ENCODE measurements at regions of chr17 and their contacts with region 1.

Region 1: GRCh38 chr17:1648963-1649843 is 463 bp downstream of the RILP start:
- DNase-seq: peak; percentile 90 to 96 (median 94)
- H3K4me3 ChIP-seq: peak overlapping the region; percentile 59
- H3K4me3 Mint-ChIP-seq: peak overlapping the region; percentile 50 to 77 (median 72)
- H3K27ac ChIP-seq: peak overlapping the region; percentile 59
- H3K27ac Mint-ChIP-seq: peak overlapping the region in 3 of 8 donors; percentile 29 to 72 (median 66)
- H3K4me1 ChIP-seq: peaks cover 19% of the 10 kb centered on the region
- H3K4me1 Mint-ChIP-seq: peaks cover 6 to 29% (median 10%) of the 10 kb centered on the region in 3 donors
- H3K27me3 ChIP-seq: no peaks in the 10 kb centered on the region
- H3K27me3 Mint-ChIP-seq: no peaks in the 10 kb centered on the region

Region 2: DNA sequence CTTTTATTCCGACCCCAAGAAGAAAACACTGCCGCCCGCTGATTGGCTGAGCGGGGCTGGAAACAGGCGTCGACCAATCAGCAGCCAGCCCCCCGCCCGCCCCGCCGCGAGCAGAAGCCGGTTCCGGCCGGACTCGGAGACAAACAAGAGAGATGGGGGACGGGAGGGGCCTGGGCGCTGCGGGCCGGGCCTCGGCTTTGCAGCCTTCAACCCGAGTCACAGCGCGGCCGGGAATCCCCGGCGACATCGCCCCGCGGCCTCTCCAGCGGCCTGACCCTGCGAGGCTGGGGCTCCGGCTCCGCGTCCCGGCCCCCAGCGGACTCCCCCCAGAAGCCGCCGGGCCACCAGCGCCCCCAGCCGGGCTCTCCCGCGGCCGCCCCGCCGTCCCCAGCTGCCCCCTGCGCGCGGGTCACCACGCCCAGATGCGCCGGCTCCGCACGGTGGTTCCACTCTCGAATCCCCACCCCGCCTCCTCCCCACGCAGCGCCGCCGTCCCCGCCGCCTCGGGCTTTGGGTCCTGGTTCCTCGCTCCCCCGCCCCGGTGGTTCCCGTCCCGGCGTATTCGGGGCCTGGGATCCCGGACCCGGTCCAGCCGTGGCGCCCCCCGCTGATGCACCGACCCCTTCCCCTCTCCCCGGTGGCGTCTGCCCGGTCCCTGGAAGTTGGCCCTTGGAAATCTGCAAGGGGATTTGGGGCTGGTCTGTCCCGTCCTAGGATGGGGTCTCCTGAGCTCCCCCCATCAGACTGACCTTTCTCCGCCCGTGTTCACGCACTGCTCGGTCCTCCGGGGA is 20.2 kb before region 1 on chr17:
- CTCF ChIA-PET with region 1: interaction called, 49 read pairs
- POLR2A ChIA-PET with region 1: interaction called, 20 read pairs
- DNase-seq: peak; percentile 83 to 94 (median 86)
- H3K4me3 ChIP-seq: peak overlapping the region; percentile 77
- H3K4me3 Mint-ChIP-seq: peak overlapping the region; percentile 91 to 97 (median 94)
- H3K27ac ChIP-seq: peak overlapping the region; percentile 69
- H3K27ac Mint-ChIP-seq: peak overlapping the region; percentile 75 to 94 (median 86)
- H3K4me1 ChIP-seq: peaks cover 17% of the 10 kb centered on the region
- H3K4me1 Mint-ChIP-seq: peaks cover 10 to 24% (median 11%) of the 10 kb centered on the region in 3 donors
- H3K27me3 ChIP-seq: no peaks in the 10 kb centered on the region
- H3K27me3 Mint-ChIP-seq: peaks cover 0 to 4% of the 10 kb centered on the region in 2 donors

Region 3: GRCh38 chr17:1661045-1661444 is 11.8 kb after region 1 on chr17:
- CTCF ChIA-PET with region 1: interaction called, 15 read pairs
- POLR2A ChIA-PET with region 1: interaction called, 7 read pairs
- DNase-seq: no peak
- H3K4me3 ChIP-seq: no peak overlapping the region
- H3K4me3 Mint-ChIP-seq: no peak overlapping the region
- H3K27ac ChIP-seq: no peak overlapping the region
- H3K27ac Mint-ChIP-seq: peak overlapping the region in 1 of 8 donors; percentile 71
- H3K4me1 ChIP-seq: no peaks in the 10 kb centered on the region
- H3K4me1 Mint-ChIP-seq: peaks cover 2 to 9% (median 3%) of the 10 kb centered on the region in 3 donors
- H3K27me3 ChIP-seq: no peaks in the 10 kb centered on the region
- H3K27me3 Mint-ChIP-seq: no peaks in the 10 kb centered on the region

Region 4: GRCh38 chr17:1673041-1673785 is 24.0 kb after region 1 on chr17:
- CTCF ChIA-PET with region 1: interaction called, 19 read pairs
- POLR2A ChIA-PET with region 1: no interaction called
- DNase-seq: peak in 3 of 5 donors; percentile 9 to 19 (median 10)
- H3K4me3 ChIP-seq: no peak overlapping the region
- H3K4me3 Mint-ChIP-seq: no peak overlapping the region
- H3K27ac ChIP-seq: no peak overlapping the region
- H3K27ac Mint-ChIP-seq: peak overlapping the region in 6 of 8 donors; percentile 6 to 90 (median 48)
- H3K4me1 ChIP-seq: peaks cover 5% of the 10 kb centered on the region
- H3K4me1 Mint-ChIP-seq: peaks cover 21 to 41% (median 34%) of the 10 kb centered on the region in 3 donors
- H3K27me3 ChIP-seq: no peaks in the 10 kb centered on the region
- H3K27me3 Mint-ChIP-seq: no peaks in the 10 kb centered on the region

Region 5: DNA sequence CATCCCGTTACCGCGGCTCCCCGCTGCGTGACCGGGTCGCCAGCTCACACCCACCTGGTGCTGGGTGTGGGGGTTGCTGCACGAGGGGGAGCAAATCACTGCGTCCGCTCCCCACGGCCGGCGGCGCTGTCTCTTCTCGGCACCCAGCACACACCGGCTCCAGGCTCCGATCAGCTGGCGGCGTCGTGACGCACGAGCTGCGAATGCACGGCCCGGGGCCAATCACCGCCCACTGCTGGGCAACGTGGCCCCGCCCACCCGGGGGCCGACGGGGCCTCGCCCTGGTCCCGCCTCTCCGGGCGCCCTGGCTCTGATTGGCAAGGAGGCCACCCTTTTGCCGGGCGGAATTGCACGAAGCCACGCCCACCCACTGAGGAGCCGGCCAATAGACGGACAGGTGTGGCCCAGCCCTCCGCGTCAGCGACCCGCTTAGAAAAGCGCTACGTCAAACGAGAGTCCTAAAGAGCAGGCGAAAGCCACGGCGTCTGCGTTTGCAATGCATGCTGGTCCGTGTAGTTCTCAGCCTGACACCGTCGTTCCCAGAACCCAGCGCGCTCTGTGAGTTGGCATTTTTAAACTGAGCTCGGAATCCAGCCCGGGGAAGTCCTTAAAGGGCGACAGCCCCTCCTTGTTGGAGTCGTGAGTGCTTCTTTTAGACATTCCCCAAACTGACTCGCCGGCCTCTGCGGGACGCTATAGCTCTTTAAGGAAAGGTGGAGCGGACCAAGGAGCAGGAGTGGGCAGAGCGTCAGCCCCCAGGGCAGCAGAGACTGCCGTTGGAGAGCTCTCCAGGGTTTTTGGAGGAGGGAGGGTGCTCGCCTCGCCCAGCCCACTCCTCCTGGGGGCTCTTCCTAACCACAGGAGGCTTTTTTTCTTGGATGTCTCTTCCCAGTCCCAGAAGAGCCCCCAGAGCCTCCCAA is 67.1 kb after region 1 on chr17:
- CTCF ChIA-PET with region 1: interaction called, 11 read pairs
- POLR2A ChIA-PET with region 1: interaction called, 6 read pairs
- DNase-seq: peak; percentile 100
- H3K4me3 ChIP-seq: peak overlapping the region; percentile 85
- H3K4me3 Mint-ChIP-seq: peak overlapping the region; percentile 88 to 97 (median 93)
- H3K27ac ChIP-seq: peak overlapping the region; percentile 89
- H3K27ac Mint-ChIP-seq: peak overlapping the region; percentile 89 to 100 (median 96)
- H3K4me1 ChIP-seq: peaks cover 31% of the 10 kb centered on the region
- H3K4me1 Mint-ChIP-seq: peaks cover 26 to 39% (median 37%) of the 10 kb centered on the region in 3 donors
- H3K27me3 ChIP-seq: no peaks in the 10 kb centered on the region
- H3K27me3 Mint-ChIP-seq: no peaks in the 10 kb centered on the region

Region 6: DNA sequence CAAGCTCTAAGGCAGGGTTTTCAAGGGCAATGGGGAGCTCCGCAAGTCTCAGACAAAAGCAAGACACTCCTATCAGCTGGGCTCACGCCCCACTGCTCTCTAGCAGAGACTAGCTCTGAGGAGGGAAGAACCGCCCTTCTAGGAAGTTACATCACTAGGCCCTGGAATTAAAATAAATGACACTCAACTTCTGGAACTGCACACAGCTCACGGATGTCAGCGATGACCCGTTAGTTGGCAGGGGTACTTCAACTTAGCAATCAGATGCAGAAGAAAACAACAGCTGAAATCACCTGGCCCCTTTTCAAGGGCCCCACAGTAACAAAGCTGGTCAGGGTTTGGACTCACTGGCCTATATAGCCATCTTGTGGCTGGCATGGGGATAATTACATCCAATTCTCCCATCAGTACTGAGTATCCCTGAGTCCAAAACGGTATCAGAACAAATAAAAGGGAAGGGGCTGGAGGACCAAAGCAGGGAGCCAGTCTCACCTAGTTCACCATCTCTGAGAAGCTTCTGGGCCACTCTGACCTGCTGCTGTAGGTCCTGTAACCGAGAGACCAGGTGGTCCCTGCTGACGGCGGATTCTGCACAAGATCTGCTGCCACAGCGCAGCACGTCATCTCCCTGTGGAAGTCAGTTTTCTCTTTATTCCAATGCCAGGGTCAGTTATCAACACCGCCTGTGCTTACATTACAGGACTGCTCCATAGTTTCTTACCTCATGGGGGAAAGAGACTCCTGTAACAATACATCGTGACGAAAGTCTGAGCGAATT is 134.8 kb after region 1 on chr17:
- CTCF ChIA-PET with region 1: no interaction called
- POLR2A ChIA-PET with region 1: no interaction called
- DNase-seq: no peak
- H3K4me3 ChIP-seq: no peak overlapping the region
- H3K4me3 Mint-ChIP-seq: no peak overlapping the region
- H3K27ac ChIP-seq: no peak overlapping the region
- H3K27ac Mint-ChIP-seq: peak overlapping the region in 2 of 8 donors; percentile 11 to 38
- H3K4me1 ChIP-seq: no peaks in the 10 kb centered on the region
- H3K4me1 Mint-ChIP-seq: peaks cover 6 to 10% (median 6%) of the 10 kb centered on the region in 3 donors
- H3K27me3 ChIP-seq: no peaks in the 10 kb centered on the region
- H3K27me3 Mint-ChIP-seq: no peaks in the 10 kb centered on the region

Measured in CD8-positive, alpha-beta memory T cell (primary cell).